Endothelial cell of umbilical vein (primary cell): ENCODE measurements at regions of chr11 and their contacts with region 1.

Region 1: DNA sequence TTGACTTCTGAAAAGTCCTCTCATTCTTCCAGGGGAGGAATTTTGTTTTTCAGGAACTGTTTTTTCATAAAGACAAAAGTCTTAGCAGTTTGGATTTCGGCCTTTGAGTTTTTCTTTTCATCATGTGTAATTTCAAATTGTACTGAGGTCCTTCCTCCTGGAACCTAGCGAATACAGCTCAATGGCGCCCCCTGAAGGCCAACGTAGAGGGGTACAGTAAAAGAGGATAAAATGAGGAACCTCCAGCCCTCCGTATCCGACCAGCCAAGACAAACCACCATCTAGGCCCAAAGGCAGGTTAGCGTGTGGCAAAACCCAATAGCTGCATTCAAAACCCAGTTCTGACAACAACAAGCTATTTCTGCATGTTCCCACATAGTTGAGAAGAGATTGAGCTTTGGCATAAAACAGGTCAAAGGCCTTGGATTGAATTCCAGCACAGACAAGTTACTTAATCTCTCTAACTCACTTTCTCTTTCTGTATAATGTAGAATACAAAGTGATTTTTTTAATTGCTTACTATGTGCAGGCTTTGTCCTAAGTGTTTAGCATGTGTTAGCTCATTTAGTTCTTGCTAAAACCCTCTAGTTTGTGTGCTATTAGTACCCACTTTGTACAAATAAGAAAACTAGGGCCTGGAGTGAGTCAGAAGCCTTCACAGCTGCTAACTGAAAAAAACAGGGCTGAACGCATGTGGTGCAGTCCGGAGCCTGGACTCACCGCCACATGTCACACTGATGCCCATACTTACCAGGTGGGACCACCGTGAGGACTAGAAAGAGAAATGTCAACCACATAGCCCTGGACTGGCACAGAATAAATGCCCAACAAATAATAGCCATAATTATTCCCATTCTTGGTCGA is 43.2 kb upstream of the ETS1 start:
- DNase-seq: peak; percentile 89
- H3K4me3 ChIP-seq: no peak overlapping the region
- H3K27ac ChIP-seq: peak overlapping the region; percentile 22
- H3K4me1 ChIP-seq: peaks cover 8% of the 10 kb centered on the region
- H3K27me3 ChIP-seq: no peaks in the 10 kb centered on the region
- CTCF ChIP-seq: peak; percentile 71 to 84
- POLR2A ChIP-seq: no peak

Region 2: DNA sequence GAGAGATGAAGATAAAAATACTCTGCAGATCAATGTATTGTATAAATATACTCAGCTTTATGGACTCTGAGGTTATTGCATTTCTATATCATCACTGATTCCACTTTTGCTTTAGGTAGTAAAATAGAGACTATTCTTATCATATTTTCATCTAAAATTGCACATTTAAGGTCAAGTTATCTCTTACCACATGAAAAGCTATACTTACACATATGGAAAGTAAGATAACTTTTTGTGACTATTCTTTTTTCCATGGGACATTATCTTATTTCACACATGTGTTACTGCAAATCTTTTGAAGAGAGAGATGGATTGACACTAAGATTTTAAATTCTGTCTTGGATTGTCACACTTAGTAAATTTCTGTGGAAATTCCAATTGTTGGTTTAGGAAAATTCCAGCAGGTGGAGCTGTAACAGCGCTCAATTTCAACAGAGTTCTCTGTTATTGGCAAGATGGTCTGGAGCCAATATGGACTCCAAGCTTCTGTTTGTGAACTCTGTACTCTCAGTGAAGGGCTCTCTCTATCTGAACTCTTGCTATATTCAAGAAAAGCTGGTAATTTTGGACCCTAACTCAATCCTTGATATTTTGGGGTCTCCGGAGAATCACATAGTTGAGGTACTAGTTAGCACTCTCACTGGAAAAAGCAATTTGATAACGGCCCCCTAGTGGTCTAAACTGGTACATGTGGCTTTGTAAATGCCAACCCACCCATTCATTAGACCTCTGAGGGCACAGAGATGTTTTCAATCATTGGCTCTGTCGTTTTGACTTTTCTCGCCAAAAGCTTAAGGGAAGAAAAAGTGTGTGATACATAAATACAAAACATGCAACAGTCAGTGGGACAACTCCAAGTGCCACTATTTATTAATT is 472.9 kb before region 1 on chr11:
- CTCF ChIA-PET with region 1: interaction called, 61 read pairs
- POLR2A ChIA-PET with region 1: no interaction called
- dilution Hi-C with region 1: loop called (anchors 25 kb)
- intact Hi-C with region 1: loop called (anchors 1 kb)
- DNase-seq: peak; percentile 87
- H3K4me3 ChIP-seq: peak overlapping the region in 1 of 3 experiments; percentile 48
- H3K27ac ChIP-seq: peak overlapping the region; percentile 75
- H3K4me1 ChIP-seq: peaks cover 16% of the 10 kb centered on the region
- H3K27me3 ChIP-seq: no peaks in the 10 kb centered on the region
- CTCF ChIP-seq: peak; percentile 66 to 86
- POLR2A ChIP-seq: no peak

Region 3: GRCh38 chr11:128210148-128210940 is 420.3 kb before region 1 on chr11:
- CTCF ChIA-PET with region 1: interaction called, 14 read pairs
- POLR2A ChIA-PET with region 1: no interaction called
- dilution Hi-C with region 1: no loop called
- intact Hi-C with region 1: no loop called
- DNase-seq: peak; percentile 98
- H3K4me3 ChIP-seq: peak overlapping the region in 1 of 3 experiments; percentile 44
- H3K27ac ChIP-seq: peak overlapping the region; percentile 97
- H3K4me1 ChIP-seq: peaks cover 49% of the 10 kb centered on the region
- H3K27me3 ChIP-seq: no peaks in the 10 kb centered on the region
- CTCF ChIP-seq: no peak
- POLR2A ChIP-seq: no peak

Region 4: GRCh38 chr11:128271401-128271800 is 359.2 kb before region 1 on chr11:
- CTCF ChIA-PET with region 1: no interaction called
- POLR2A ChIA-PET with region 1: no interaction called
- dilution Hi-C with region 1: no loop called
- intact Hi-C with region 1: no loop called
- DNase-seq: peak; percentile 42
- H3K4me3 ChIP-seq: no peak overlapping the region
- H3K27ac ChIP-seq: no peak overlapping the region
- H3K4me1 ChIP-seq: no peaks in the 10 kb centered on the region
- H3K27me3 ChIP-seq: no peaks in the 10 kb centered on the region
- CTCF ChIP-seq: no peak
- POLR2A ChIP-seq: no peak

Region 5: GRCh38 chr11:128342511-128343134 is 288.0 kb before region 1 on chr11:
- CTCF ChIA-PET with region 1: interaction called, 6 read pairs
- POLR2A ChIA-PET with region 1: no interaction called
- dilution Hi-C with region 1: no loop called
- intact Hi-C with region 1: loop called (anchors 2 kb)
- DNase-seq: peak; percentile 98
- H3K4me3 ChIP-seq: no peak overlapping the region
- H3K27ac ChIP-seq: peak overlapping the region; percentile 83
- H3K4me1 ChIP-seq: peaks cover 31% of the 10 kb centered on the region
- H3K27me3 ChIP-seq: no peaks in the 10 kb centered on the region
- CTCF ChIP-seq: no peak
- POLR2A ChIP-seq: peak; percentile 47

Region 6: DNA sequence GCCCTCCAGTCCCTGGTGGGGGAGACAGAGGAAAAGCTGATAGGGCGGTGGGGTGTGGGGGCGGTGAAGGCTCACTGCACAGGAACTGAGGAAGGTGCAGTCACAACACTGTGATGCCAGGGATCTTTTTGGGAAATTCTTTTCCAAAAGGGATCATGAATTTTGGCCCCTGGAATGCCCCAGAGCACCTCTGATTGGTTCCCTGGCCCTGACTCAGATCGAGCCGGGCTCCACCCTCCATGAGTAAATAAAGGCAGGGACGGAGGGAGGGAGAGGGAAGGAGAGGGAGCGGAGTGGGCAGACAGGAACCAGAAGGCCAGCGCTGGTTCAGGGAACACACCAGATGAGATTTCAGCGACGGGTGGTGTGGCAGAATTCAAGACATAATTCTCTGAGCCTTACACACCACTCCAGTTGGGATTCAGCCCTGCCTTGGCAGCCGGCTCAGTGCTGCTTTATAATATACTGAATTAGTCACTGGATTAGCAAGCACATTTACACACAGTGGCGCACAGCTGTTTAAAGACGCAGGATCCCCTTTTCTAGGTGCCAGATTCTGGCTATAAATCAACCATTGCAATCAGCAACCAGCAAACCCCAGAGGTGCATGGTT is 123.5 kb before region 1 on chr11:
- CTCF ChIA-PET with region 1: interaction called, 8 read pairs
- POLR2A ChIA-PET with region 1: no interaction called
- dilution Hi-C with region 1: no loop called
- intact Hi-C with region 1: loop called (anchors 5 kb)
- DNase-seq: peak; percentile 88
- H3K4me3 ChIP-seq: peak overlapping the region in 1 of 3 experiments; percentile 12
- H3K27ac ChIP-seq: peak overlapping the region; percentile 89
- H3K4me1 ChIP-seq: peaks cover 66% of the 10 kb centered on the region
- H3K27me3 ChIP-seq: no peaks in the 10 kb centered on the region
- CTCF ChIP-seq: no peak
- POLR2A ChIP-seq: peak; percentile 57

Region 7: DNA sequence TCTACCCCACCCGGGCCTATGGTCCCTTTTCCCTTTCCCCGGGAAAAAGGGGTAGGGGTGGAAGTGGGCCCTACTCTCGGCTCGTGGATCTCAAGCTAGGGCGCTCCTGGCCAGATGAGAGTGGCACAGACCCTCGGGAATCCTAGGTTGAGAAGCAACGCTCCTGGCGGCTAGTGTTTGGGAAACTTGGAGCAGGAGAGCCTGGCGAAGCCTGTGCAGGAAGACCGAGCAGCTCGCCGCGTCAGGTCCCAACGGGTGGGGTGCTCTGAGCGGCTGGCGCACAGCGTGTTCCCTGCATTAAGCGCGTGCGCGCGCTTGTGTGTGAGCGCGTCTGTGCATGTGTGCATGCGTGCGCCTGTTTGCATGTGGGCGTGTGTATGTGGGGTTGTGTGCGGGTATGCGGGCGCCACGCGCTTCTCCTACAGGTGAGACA is 56.2 kb after region 1 on chr11:
- CTCF ChIA-PET with region 1: interaction called, 20 read pairs
- POLR2A ChIA-PET with region 1: no interaction called
- dilution Hi-C with region 1: no loop called
- intact Hi-C with region 1: no loop called
- DNase-seq: peak; percentile 53
- H3K4me3 ChIP-seq: peak overlapping the region; percentile 16 to 25 (median 20)
- H3K27ac ChIP-seq: no peak overlapping the region
- H3K4me1 ChIP-seq: peaks cover 33% of the 10 kb centered on the region
- H3K27me3 ChIP-seq: peaks cover 35% of the 10 kb centered on the region in 2 experiments
- CTCF ChIP-seq: no peak
- POLR2A ChIP-seq: no peak

Region 8: GRCh38 chr11:128776424-128777284 is 146.1 kb after region 1 on chr11:
- CTCF ChIA-PET with region 1: interaction called, 3 read pairs
- POLR2A ChIA-PET with region 1: no interaction called
- dilution Hi-C with region 1: no loop called
- intact Hi-C with region 1: loop called (anchors 5 kb)
- DNase-seq: no peak
- H3K4me3 ChIP-seq: no peak overlapping the region
- H3K27ac ChIP-seq: no peak overlapping the region
- H3K4me1 ChIP-seq: peaks cover 27% of the 10 kb centered on the region
- H3K27me3 ChIP-seq: no peaks in the 10 kb centered on the region
- CTCF ChIP-seq: peak; percentile 29 to 39
- POLR2A ChIP-seq: no peak